ENCODE measurements at regions of chr4 and their contacts with region 1.

Region 1: GRCh38 chr4:27000820-27001219 is 140.2 kb downstream of the STIM2 start:
- DNase-seq: no peak
- ATAC-seq: peak; percentile 53
- H3K4me3 Mint-ChIP-seq: no peak overlapping the region
- H3K27ac Mint-ChIP-seq: peak overlapping the region; percentile 51
- H3K4me1 Mint-ChIP-seq: peaks cover 61% of the 10 kb centered on the region
- H3K27me3 Mint-ChIP-seq: no peaks in the 10 kb centered on the region

Region 2: GRCh38 chr4:25938787-25939186 is 1062.0 kb before region 1 on chr4:
- CTCF ChIA-PET with region 1: no interaction called
- POLR2A ChIA-PET with region 1: no interaction called
- intact Hi-C with region 1: loop called in 1 of 2 experiments (anchors 10 kb)
- DNase-seq: peak; percentile 76
- ATAC-seq: peak; percentile 97
- H3K4me3 Mint-ChIP-seq: peak overlapping the region; percentile 5
- H3K27ac Mint-ChIP-seq: peak overlapping the region; percentile 72
- H3K4me1 Mint-ChIP-seq: peaks cover 22% of the 10 kb centered on the region
- H3K27me3 Mint-ChIP-seq: peaks cover 18% of the 10 kb centered on the region

Region 3: DNA sequence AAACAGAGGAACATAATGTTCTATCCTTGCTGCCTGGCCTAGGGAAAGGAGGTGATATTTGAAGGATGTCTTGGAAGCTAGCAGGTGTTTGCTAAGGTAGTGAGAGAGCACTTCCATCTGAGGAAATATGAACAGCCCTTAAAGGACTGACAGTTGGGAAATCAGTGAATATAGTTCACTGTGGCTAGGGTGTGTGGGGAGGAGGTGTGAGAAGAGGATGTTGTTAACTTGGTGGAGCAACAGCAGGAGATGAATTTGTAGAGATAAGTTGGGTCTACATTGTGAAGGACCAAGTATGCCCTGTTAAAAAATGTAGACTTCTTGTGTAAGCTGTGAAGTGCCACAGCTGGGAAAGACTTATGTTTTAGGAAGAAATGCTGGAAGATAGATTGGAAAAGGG is 391.4 kb before region 1 on chr4:
- CTCF ChIA-PET with region 1: no interaction called
- POLR2A ChIA-PET with region 1: no interaction called
- intact Hi-C with region 1: no loop called
- DNase-seq: no peak
- ATAC-seq: no peak
- H3K4me3 Mint-ChIP-seq: no peak overlapping the region
- H3K27ac Mint-ChIP-seq: no peak overlapping the region
- H3K4me1 Mint-ChIP-seq: peaks cover 16% of the 10 kb centered on the region
- H3K27me3 Mint-ChIP-seq: no peaks in the 10 kb centered on the region

Region 4: DNA sequence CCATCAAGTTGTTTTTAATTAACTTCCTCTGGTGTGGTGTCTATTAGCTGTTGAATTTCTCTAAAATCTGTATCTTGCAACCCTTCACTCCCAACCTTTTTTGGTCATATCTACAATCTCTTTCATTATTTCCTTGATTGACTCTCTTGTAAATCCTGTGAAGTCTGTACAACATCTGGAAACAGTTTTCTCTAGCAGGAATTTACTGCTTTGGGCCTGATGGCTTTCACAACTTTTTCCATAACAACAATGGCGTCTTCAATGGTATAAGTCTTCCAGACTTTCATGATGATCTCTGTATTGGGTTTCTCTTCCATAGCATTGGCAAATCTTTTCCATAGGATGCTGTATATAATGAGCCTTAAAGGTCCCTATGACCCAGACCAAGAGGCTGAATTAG is 367.9 kb before region 1 on chr4:
- CTCF ChIA-PET with region 1: no interaction called
- POLR2A ChIA-PET with region 1: no interaction called
- intact Hi-C with region 1: no loop called
- DNase-seq: no peak
- ATAC-seq: no peak
- H3K4me3 Mint-ChIP-seq: no peak overlapping the region
- H3K27ac Mint-ChIP-seq: no peak overlapping the region
- H3K4me1 Mint-ChIP-seq: no peaks in the 10 kb centered on the region
- H3K27me3 Mint-ChIP-seq: no peaks in the 10 kb centered on the region

Region 5: DNA sequence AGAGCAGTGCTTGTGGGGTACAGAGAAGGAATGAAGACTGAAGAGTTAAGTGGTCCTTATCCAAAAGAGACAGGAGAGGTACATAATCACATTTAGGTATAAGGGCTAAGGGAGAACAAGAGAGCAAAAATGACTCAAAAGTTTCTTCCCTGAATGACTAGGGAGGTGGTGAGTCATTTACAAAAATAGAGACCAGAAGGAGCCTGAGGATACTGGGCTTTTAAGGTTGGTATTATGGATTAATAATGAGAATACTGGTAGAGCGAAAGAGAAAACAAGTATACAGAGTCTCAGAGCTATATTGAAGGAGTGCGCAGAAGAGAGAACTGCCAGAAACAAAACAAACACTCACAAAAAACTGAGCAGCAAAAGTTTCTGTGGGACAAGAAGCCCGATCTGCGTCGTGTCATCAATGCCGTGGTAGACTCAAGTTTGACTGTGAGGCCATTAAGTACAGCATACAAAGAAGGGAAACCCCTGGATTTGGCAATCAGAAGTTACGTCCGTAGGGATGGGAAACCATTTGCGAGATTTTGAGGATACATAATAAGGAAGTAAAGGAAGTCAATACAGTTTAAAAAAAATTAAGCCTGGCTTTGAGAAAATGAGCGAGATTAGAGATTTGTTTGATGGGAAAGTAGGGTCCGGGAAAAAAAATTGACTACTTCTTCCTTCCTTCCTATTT is 269.3 kb before region 1 on chr4:
- CTCF ChIA-PET with region 1: interaction called, 3 read pairs
- POLR2A ChIA-PET with region 1: no interaction called
- intact Hi-C with region 1: loop called (anchors 5 kb)
- DNase-seq: peak; percentile 11
- ATAC-seq: peak; percentile 96
- H3K4me3 Mint-ChIP-seq: no peak overlapping the region
- H3K27ac Mint-ChIP-seq: peak overlapping the region; percentile 42
- H3K4me1 Mint-ChIP-seq: peaks cover 11% of the 10 kb centered on the region
- H3K27me3 Mint-ChIP-seq: no peaks in the 10 kb centered on the region

Region 6: DNA sequence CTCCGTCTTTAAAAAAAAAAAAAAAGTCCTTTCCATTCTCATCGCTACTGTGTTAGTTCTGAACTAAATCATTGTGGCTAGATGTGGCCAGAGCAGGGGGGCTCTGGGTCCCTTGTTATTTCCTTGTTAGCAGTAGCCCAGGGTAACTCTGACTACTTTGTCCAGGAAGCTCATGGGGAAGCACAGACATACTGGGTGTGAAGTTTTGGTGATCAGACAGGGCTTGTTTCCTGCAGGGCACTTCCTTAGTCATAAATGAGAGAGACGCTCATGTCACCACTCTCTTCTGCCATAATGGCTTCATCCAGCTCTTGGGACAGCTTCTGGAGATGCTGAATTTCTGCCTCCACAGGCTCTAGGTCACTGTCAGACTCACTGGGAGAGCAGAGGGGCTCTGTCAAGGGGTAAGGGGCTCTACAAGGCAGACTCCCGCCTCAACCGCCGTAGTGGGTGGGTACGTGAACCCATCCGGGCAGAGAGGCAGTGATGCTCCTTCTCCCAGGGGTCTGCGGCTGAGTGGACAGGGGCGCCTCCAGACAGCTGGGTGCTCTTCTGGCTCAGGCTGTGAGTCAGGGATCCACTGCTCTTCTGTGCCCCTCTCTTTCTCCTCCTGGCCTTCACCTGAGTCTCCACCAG is 127.3 kb before region 1 on chr4:
- CTCF ChIA-PET with region 1: interaction called, 4 read pairs
- POLR2A ChIA-PET with region 1: interaction called, 16 read pairs
- intact Hi-C with region 1: no loop called
- DNase-seq: peak; percentile 77
- ATAC-seq: peak; percentile 94
- H3K4me3 Mint-ChIP-seq: peak overlapping the region; percentile 4
- H3K27ac Mint-ChIP-seq: peak overlapping the region; percentile 83
- H3K4me1 Mint-ChIP-seq: peaks cover 80% of the 10 kb centered on the region
- H3K27me3 Mint-ChIP-seq: no peaks in the 10 kb centered on the region

Region 7: GRCh38 chr4:26964512-26964911 is 36.3 kb before region 1 on chr4:
- CTCF ChIA-PET with region 1: no interaction called
- POLR2A ChIA-PET with region 1: interaction called, 3 read pairs
- intact Hi-C with region 1: loop called in 1 of 2 experiments (anchors 2 kb)
- DNase-seq: no peak
- ATAC-seq: no peak
- H3K4me3 Mint-ChIP-seq: no peak overlapping the region
- H3K27ac Mint-ChIP-seq: no peak overlapping the region
- H3K4me1 Mint-ChIP-seq: peaks cover 58% of the 10 kb centered on the region
- H3K27me3 Mint-ChIP-seq: no peaks in the 10 kb centered on the region

Region 8: DNA sequence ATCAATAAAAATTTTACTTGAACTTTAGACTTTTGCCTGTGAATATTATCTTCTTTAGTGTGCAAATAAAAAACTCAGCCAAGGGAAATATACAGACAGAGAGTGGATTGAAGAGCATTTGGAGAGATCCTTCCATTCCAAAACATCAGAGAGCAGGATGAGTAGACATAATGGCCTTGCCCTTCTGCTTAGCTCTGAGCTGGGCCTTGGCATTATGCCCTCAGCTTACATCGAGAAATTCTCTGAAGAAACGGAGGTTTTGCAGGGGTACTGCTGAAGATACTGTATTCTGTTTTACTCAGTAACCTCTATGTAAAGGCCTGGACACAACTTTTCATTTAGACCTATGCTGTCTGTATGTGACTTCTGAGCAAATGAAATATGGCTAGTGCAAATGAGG is 177.2 kb after region 1 on chr4:
- CTCF ChIA-PET with region 1: no interaction called
- POLR2A ChIA-PET with region 1: no interaction called
- intact Hi-C with region 1: no loop called
- DNase-seq: no peak
- ATAC-seq: no peak
- H3K4me3 Mint-ChIP-seq: no peak overlapping the region
- H3K27ac Mint-ChIP-seq: no peak overlapping the region
- H3K4me1 Mint-ChIP-seq: no peaks in the 10 kb centered on the region
- H3K27me3 Mint-ChIP-seq: peaks cover 5% of the 10 kb centered on the region

Measured in activated CD4-positive, alpha-beta T cell treated with anti-CD3 and anti-CD28 coated beads for 36 hours (primary cell).